Heart left ventricle (tissue), 16 donors: ENCODE measurements at regions of chr18 and their contacts with region 1.

Region 1: DNA sequence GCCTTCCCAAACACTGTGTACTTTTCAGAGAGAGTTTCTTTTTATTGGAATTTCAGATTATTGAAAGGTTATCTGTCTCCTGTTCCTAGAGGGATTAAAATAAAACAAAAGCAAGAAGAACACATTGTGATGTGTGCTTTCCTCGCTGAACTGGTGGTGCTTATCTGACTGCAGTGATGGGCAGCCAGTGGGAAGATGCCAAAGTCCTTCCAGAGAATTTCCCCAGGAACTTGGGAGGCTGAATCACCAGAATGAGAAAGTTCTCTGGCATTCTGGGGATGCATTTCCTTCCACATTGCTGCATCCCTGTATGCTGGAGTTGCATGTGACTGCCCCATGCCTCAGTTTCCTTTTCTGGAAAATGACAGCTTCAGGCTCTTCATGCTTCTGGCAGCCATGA is 53.9 kb upstream of the SEC11C start:
- DNase-seq: no peak
- ATAC-seq: no peak
- H3K4me3 ChIP-seq: no peak overlapping the region
- H3K27ac ChIP-seq: no peak overlapping the region
- H3K4me1 ChIP-seq: no peaks in the 10 kb centered on the region
- H3K27me3 ChIP-seq: peaks cover 0 to 15% (median 0%) of the 10 kb centered on the region in 9 donors
- CTCF ChIP-seq: no peak
- POLR2A ChIP-seq: no peak

Region 2: GRCh38 chr18:58438161-58438957 is 647.4 kb before region 1 on chr18:
- intact Hi-C with region 1: no loop called
- DNase-seq: no peak
- ATAC-seq: no peak
- H3K4me3 ChIP-seq: peak overlapping the region in 9 of 12 donors; percentile 26 to 55 (median 34)
- H3K27ac ChIP-seq: peak overlapping the region in 3 of 12 donors; percentile 8 to 11 (median 9)
- H3K4me1 ChIP-seq: peaks cover 0 to 13% (median 0%) of the 10 kb centered on the region in 12 donors
- H3K27me3 ChIP-seq: no peaks in the 10 kb centered on the region
- CTCF ChIP-seq: no peak
- POLR2A ChIP-seq: no peak

Region 3: GRCh38 chr18:59022167-59022945 is 63.4 kb before region 1 on chr18:
- intact Hi-C with region 1: no loop called
- DNase-seq: peak in 1 of 5 donors; percentile 42
- ATAC-seq: peak in 3 of 4 donors; percentile 48 to 57 (median 53)
- H3K4me3 ChIP-seq: no peak overlapping the region
- H3K27ac ChIP-seq: peak overlapping the region in 10 of 12 donors; percentile 21 to 76 (median 54)
- H3K4me1 ChIP-seq: peaks cover 0 to 39% (median 11%) of the 10 kb centered on the region in 12 donors
- H3K27me3 ChIP-seq: no peaks in the 10 kb centered on the region
- CTCF ChIP-seq: no peak
- POLR2A ChIP-seq: no peak

Region 4: GRCh38 chr18:59139371-59140298 is 53.8 kb after region 1 on chr18 and contains the start of gene SEC11C:
- intact Hi-C with region 1: loop called in 1 of 10 experiments (anchors 5 kb)
- DNase-seq: peak; percentile 95 to 98 (median 97)
- ATAC-seq: peak; percentile 98 to 99 (median 98)
- H3K4me3 ChIP-seq: peak within 1 kb of the TSS; percentile 60 to 91 (median 82)
- H3K27ac ChIP-seq: peak within 1 kb of the TSS; percentile 60 to 90 (median 82)
- H3K4me1 ChIP-seq: peaks cover 0 to 19% (median 6%) of the 10 kb centered on the region in 12 donors
- H3K27me3 ChIP-seq: peaks cover 0 to 15% (median 0%) of the 10 kb centered on the region in 9 donors
- CTCF ChIP-seq: no peak
- POLR2A ChIP-seq: peak in 1 of 2 donors; percentile 39
- total RNA-seq, gene SEC11C: 10.2 to 44.0 (median 18.1) TPM

Region 5: DNA sequence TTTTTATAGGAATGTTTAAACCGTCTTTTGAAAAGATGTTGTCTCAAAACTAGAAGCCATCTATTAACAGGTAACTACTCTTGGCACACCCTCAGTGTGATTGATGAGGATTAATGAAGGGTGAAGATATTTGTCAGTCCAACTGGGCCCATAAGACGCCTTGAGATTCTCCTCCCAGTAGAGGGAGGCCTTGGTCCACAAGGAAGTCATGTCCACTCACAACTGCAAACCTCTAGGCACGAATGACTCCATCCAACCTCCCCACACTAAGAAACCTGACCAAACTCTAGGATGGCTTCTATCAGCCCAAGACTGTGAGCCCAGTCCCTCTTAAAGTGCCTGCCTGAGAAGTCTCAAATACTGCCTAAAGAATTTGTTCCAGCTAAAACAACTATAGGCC is 115.0 kb after region 1 on chr18:
- intact Hi-C with region 1: no loop called
- DNase-seq: no peak
- ATAC-seq: no peak
- H3K4me3 ChIP-seq: no peak overlapping the region
- H3K27ac ChIP-seq: no peak overlapping the region
- H3K4me1 ChIP-seq: no peaks in the 10 kb centered on the region
- H3K27me3 ChIP-seq: peaks cover 0 to 13% (median 0%) of the 10 kb centered on the region in 9 donors
- CTCF ChIP-seq: no peak
- POLR2A ChIP-seq: no peak

Region 6: GRCh38 chr18:59268721-59269562 is 183.1 kb after region 1 on chr18:
- intact Hi-C with region 1: loop called in 1 of 10 experiments (anchors 10 kb)
- DNase-seq: peak in 1 of 5 donors; percentile 19
- ATAC-seq: peak in 3 of 4 donors; percentile 57 to 69 (median 65)
- H3K4me3 ChIP-seq: peak overlapping the region in 7 of 12 donors; percentile 23 to 33 (median 31)
- H3K27ac ChIP-seq: no peak overlapping the region
- H3K4me1 ChIP-seq: peaks cover 0 to 54% (median 22%) of the 10 kb centered on the region in 12 donors
- H3K27me3 ChIP-seq: peaks cover 79 to 100% (median 98%) of the 10 kb centered on the region in 9 donors
- CTCF ChIP-seq: peak in 4 of 12 donors; percentile 10 to 39 (median 14)
- POLR2A ChIP-seq: no peak

Region 7: DNA sequence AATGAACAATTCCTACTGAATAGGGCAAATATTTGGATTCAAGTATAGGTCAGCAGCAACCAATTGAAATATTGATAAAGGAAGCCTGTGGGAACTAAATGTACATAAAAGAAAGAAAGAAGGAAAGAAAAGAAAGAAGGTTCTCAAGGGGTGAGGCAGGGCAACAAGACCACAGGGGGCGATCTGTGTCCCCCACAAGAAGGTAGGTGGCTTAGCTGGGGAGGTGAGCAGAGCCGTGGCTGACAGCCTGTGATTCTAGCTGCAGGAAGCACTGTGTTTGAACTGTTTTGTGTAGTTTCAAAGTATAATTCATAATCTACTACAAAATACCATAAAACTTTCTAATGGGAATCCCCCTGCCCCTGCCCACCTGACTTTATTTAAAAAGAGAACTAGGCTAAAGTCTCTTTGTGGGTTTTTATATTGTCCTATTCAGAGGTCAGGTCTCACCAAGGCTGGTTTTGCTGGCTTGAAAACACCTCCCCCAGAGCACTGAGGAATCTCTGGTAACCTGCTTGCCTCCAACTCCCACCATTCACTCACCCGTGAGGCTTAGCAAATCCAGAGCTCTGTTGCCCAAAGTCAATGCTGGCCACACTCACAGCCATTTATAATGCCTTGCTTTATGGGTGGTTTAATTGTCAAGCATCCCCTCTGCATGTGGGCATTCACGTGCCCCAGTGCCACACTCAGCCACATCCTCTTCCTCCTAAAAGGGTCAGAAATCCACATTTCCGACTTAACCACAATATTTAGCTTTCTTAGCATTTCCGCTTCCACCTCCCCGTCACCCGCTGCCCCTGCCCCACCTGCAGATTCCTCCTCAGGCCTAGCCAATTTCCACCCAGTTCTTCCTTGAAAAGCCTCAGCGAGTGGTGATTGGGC is 309.7 kb after region 1 on chr18:
- intact Hi-C with region 1: loop called in 4 of 10 experiments (anchors 10 kb)
- DNase-seq: no peak
- ATAC-seq: no peak
- H3K4me3 ChIP-seq: no peak overlapping the region
- H3K27ac ChIP-seq: no peak overlapping the region
- H3K4me1 ChIP-seq: no peaks in the 10 kb centered on the region
- H3K27me3 ChIP-seq: peaks cover 0 to 17% (median 0%) of the 10 kb centered on the region in 9 donors
- CTCF ChIP-seq: no peak
- POLR2A ChIP-seq: no peak